Common myeloid progenitor, CD34-positive (primary cell): ENCODE measurements at regions of chr17 and their contacts with region 1.

Region 1: GRCh38 chr17:58317421-58318064 is 11.1 kb downstream of the TSPOAP1 start:
- DNase-seq: peak; percentile 80 to 91 (median 88)
- H3K4me3 ChIP-seq: no peak overlapping the region
- H3K27ac ChIP-seq: no peak overlapping the region
- H3K4me1 ChIP-seq: peaks cover 5 to 38% (median 18%) of the 10 kb centered on the region in 4 experiments
- H3K27me3 ChIP-seq: no peaks in the 10 kb centered on the region

Region 2: GRCh38 chr17:58189436-58190146 is 128.0 kb before region 1 on chr17:
- CTCF ChIA-PET with region 1: no interaction called
- POLR2A ChIA-PET with region 1: no interaction called
- DNase-seq: peak; percentile 54 to 77 (median 73)
- H3K4me3 ChIP-seq: no peak overlapping the region
- H3K27ac ChIP-seq: no peak overlapping the region
- H3K4me1 ChIP-seq: peaks cover 0 to 25% (median 13%) of the 10 kb centered on the region in 4 experiments
- H3K27me3 ChIP-seq: peaks cover 0 to 4% (median 0%) of the 10 kb centered on the region in 5 experiments

Region 3: DNA sequence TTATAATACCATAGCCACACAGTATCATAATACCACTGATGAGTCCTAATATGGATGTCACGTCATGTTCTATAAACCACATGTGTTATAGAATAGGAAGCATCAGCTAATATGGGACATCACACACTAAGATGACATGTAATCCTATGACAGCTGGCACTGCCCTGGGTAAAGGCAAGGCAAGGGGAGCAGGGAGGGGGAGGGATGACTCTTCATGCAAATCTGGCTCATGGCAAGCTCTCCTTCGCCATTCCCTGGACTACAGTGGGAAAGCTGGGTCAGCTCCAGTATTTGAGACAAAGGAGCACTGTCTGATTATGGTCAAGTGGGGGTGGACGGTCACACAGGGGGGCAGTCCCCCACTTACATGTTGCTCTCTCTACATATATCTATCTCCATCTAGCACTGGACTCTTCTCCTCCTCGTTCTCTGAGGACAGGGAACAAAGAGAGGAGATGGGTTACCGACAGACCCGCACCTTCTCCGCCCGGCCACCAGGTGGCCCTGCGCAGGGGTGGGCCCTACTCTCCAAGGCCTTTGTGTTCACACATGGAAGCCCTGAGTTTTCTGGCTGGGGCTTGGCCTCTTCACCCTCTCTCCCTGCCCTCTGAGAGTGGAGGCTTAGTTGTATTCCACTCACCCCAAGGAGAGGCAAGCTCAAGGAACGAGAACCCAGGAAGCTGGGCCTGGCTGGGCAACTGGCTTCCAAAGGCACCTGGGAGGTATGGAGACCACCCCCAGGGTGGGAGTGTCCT is 13.4 kb before region 1 on chr17:
- CTCF ChIA-PET with region 1: interaction called, 55 read pairs
- POLR2A ChIA-PET with region 1: no interaction called
- DNase-seq: peak; percentile 63 to 76 (median 68)
- H3K4me3 ChIP-seq: no peak overlapping the region
- H3K27ac ChIP-seq: no peak overlapping the region
- H3K4me1 ChIP-seq: peaks cover 0 to 46% (median 4%) of the 10 kb centered on the region in 4 experiments
- H3K27me3 ChIP-seq: no peaks in the 10 kb centered on the region

Region 4: DNA sequence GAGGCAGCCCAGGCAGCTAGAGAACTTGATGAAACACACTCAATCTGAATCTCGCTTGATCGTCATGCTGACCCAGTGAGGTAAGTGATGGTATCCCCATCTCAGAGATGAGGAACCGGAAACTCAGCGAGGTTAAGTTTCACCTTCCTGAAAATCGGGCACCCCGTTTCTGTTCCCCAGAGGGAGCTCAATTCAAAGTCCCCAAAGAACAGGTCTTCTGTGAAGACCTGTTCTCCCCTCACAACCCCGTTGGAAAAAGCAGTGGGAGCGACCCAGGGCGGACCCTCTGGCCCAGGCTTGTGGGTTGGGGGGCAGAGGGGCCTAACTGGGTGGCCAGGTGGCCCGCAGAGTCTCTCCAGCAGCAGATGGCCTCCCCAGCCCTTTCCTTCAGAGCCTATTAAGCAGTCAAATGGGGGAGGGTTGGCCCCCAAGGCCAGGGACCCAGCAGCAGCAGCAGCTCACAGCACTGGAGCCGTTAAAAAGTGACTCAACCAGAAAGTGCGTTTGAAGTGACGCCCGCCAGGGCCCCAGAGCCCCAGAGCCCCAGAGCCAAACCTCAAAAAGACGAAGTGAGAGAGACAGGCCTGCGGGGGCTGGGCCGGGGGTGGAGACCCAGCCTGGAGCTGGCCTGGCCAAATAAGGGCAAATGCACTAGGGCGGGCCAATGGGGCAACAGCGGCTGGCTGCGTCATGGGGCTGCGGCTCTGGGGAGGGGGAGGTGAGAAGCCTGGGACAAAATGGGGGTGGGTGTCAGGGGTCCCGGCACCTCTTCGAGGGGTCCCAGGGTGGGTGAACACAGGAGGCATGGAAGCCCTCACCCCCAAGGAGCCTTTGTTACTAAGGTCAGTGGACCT is 20.3 kb after region 1 on chr17:
- CTCF ChIA-PET with region 1: interaction called, 60 read pairs
- POLR2A ChIA-PET with region 1: interaction called, 8 read pairs
- DNase-seq: peak; percentile 93 to 98 (median 97)
- H3K4me3 ChIP-seq: peak overlapping the region; percentile 30 to 100 (median 99)
- H3K27ac ChIP-seq: peak overlapping the region; percentile 96 to 99
- H3K4me1 ChIP-seq: peaks cover 45 to 97% (median 89%) of the 10 kb centered on the region in 4 experiments
- H3K27me3 ChIP-seq: no peaks in the 10 kb centered on the region

Region 5: GRCh38 chr17:58352014-58352842 is 34.7 kb after region 1 on chr17 and contains the start of gene SUPT4H1:
- CTCF ChIA-PET with region 1: interaction called, 21 read pairs
- POLR2A ChIA-PET with region 1: interaction called, 10 read pairs
- DNase-seq: peak; percentile 94 to 97 (median 96)
- H3K4me3 ChIP-seq: peak within 1 kb of the TSS; percentile 80 to 99 (median 95)
- H3K27ac ChIP-seq: peak within 1 kb of the TSS; percentile 82 to 92
- H3K4me1 ChIP-seq: peaks cover 12 to 33% (median 22%) of the 10 kb centered on the region in 4 experiments
- H3K27me3 ChIP-seq: no peaks in the 10 kb centered on the region

Region 6: GRCh38 chr17:58417300-58418092 is 100.0 kb after region 1 on chr17 and contains the start of gene RNF43:
- CTCF ChIA-PET with region 1: interaction called, 57 read pairs
- POLR2A ChIA-PET with region 1: no interaction called
- DNase-seq: peak; percentile 91 to 95 (median 94)
- H3K4me3 ChIP-seq: peak within 1 kb of the TSS in 2 of 7 experiments; percentile 23 to 25
- H3K27ac ChIP-seq: no peak within 1 kb of the TSS
- H3K4me1 ChIP-seq: peaks cover 3 to 8% (median 5%) of the 10 kb centered on the region in 4 experiments
- H3K27me3 ChIP-seq: no peaks in the 10 kb centered on the region